ENCODE measurements at regions of chr10 and their contacts with region 1.

Region 1: DNA sequence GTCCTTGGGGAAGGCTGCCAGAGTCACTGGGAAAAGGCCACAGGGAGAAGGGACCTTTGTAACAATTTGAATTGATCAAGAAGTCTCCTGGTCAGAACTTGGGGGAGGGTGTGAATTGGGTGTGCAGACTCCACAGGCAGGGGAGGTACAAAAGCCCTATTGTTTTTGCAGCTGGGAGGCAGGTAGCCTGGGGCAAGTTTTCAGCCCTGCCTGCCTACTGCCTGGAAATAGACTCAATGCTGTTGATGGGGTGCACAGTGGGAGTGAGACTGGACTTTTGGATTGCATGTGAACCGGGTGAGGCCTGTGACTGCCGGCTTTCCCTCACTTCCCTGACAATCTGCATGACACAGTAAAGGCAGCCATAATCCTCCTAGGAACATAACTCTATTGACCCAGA is 947.0 kb downstream of the REEP3 start:
- DNase-seq: peak; percentile 93
- H3K4me3 Mint-ChIP-seq: peak overlapping the region; percentile 52
- H3K27ac Mint-ChIP-seq: peak overlapping the region; percentile 83
- H3K4me1 Mint-ChIP-seq: peaks cover 28% of the 10 kb centered on the region
- H3K27me3 Mint-ChIP-seq: no peaks in the 10 kb centered on the region
- CTCF ChIP-seq: no peak

Region 2: DNA sequence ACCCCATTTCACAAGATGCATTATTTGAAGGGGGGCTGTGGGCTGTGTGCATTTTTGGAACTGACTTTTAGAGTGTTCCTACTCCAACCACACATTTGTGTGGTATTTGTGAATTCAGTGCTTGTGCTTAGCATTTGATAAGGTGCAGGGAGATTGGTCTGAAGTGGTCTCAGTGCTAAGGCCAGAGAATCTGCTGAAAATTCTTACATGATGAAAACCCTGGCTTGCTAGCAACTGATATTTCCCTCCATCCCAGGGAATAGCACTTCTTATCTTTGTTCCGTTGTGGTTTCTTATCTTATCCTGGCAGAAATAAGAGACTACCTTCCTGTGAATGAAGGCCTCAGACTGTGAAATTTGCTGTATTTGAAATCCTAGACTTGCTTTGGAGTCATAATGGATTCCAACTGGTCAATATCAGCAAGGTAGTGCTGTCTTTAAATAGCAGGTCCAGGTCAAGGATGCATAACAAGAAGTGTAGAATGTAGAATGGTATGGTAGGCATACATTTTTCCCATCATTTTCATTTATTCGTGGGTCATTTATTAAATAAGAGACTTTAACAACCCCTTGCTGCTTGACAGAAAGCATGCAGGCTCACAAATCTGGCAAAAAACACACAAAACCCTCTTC is 39.9 kb after region 1 on chr10:
- CTCF ChIA-PET with region 1: no interaction called
- intact Hi-C with region 1: loop called (anchors 1 kb)
- DNase-seq: no peak
- H3K4me3 Mint-ChIP-seq: no peak overlapping the region
- H3K27ac Mint-ChIP-seq: peak overlapping the region; percentile 67
- H3K4me1 Mint-ChIP-seq: peaks cover 45% of the 10 kb centered on the region
- H3K27me3 Mint-ChIP-seq: no peaks in the 10 kb centered on the region
- CTCF ChIP-seq: no peak

Region 3: GRCh38 chr10:64515970-64516699 is 47.9 kb after region 1 on chr10:
- CTCF ChIA-PET with region 1: no interaction called
- intact Hi-C with region 1: loop called (anchors 2 kb)
- DNase-seq: no peak
- H3K4me3 Mint-ChIP-seq: no peak overlapping the region
- H3K27ac Mint-ChIP-seq: peak overlapping the region; percentile 57
- H3K4me1 Mint-ChIP-seq: peaks cover 43% of the 10 kb centered on the region
- H3K27me3 Mint-ChIP-seq: no peaks in the 10 kb centered on the region
- CTCF ChIP-seq: no peak

Region 4: DNA sequence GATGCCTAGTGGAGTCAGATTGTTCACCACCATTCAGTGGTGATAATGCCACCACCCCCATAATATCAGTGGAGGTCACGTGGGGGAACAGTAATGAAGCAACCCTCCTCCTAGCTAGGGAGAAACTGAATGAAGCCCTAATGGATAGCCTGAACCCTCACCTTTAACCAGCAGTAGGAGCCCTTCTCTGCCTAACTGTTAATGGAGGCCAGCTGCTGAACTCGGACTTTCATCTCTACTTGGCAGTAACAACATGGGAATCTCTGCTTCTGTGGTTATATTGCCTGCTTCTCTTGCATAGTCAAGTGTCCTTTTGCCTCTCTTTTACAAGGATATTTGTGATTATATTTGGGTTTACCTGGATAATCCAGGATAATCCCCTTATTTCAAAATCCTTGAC is 150.9 kb after region 1 on chr10:
- CTCF ChIA-PET with region 1: no interaction called
- intact Hi-C with region 1: loop called (anchors 5 kb)
- DNase-seq: no peak
- H3K4me3 Mint-ChIP-seq: no peak overlapping the region
- H3K27ac Mint-ChIP-seq: no peak overlapping the region
- H3K4me1 Mint-ChIP-seq: peaks cover 46% of the 10 kb centered on the region
- H3K27me3 Mint-ChIP-seq: no peaks in the 10 kb centered on the region
- CTCF ChIP-seq: no peak

Measured in Calu3 (cell line).